HEK293 (cell line): ENCODE measurements at regions of chr1 and their contacts with region 1.

Region 1: DNA sequence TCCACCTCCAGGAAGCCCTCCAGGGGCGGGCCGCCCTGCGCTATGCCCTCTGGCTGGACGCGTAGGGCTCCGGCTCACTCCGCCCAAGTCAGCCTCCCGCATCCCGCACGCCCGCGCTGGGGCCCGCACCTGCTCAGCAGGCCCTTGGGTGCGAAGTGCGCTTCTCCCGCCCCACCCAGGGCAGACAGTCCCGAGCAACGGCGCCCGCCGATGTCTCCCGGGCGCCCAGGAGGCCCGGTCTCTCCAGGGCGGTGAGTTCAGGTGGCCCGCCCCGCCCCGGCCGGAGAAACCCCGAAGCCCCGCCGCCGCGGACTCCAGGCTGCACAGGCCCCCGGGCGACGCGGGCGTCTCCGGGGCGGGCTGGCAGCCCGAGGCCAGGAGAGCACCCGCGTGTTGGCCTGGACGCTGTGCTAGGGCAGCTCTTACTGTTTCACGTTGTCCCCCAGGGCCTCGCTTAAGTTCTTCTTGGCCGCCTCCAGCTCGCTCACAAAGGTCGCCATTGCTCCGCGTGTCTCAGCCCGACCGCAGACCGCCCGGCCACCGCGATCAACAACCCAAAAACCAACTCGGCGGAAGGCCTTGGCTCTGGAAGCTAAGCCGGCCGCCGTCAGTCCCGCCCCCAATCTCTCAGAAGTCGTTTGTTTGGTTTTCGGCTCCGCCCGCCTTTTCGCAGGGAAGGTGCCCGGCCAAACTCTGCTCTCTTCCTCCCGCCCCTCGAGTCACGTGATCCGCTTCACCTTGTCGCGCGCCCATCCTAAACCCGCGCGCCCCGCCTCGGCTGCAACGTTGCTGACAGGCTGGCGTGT is at the start of gene TADA1:
- H3K4me3 ChIP-seq: peak within 1 kb of the TSS; percentile 81
- H3K27ac ChIP-seq: peak within 1 kb of the TSS; percentile 79
- H3K4me1 ChIP-seq: no peaks in the 10 kb centered on the region
- CTCF ChIP-seq: peak; percentile 66; the same call in 1 of the 2 replicates

Region 2: GRCh38 chr1:166838766-166839599 is 37.0 kb before region 1 on chr1 and contains the start of gene POGK:
- CTCF ChIA-PET with region 1: no interaction called
- POLR2A ChIA-PET with region 1: interaction called, 21 read pairs
- H3K4me3 ChIP-seq: peak within 1 kb of the TSS; percentile 62
- H3K27ac ChIP-seq: peak within 1 kb of the TSS; percentile 69
- H3K4me1 ChIP-seq: no peaks in the 10 kb centered on the region
- CTCF ChIP-seq: no peak

Region 3: DNA sequence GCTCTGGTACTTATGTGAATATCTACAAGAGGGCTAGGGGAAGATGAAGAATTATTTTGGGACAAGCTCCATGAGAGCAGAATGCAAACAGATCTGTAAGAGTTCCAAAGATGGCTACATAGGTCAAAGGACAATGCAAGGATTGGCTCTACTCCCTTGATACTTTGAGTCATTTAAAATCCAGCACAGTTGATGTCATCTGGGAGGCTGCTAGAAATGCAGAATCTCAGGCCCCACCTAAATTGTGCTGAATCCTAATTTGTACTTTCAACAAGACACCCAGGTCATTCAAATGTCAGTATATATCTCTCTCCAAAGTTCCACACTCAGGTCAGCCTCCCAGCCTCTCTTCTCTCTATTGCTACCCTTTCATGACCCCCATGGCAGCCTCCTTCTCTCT is 23.8 kb after region 1 on chr1:
- CTCF ChIA-PET with region 1: no interaction called
- POLR2A ChIA-PET with region 1: no interaction called
- H3K4me3 ChIP-seq: no peak overlapping the region
- H3K27ac ChIP-seq: no peak overlapping the region
- H3K4me1 ChIP-seq: no peaks in the 10 kb centered on the region
- CTCF ChIP-seq: no peak

Region 4: GRCh38 chr1:166933633-166934032 is 57.7 kb after region 1 on chr1:
- CTCF ChIA-PET with region 1: no interaction called
- POLR2A ChIA-PET with region 1: no interaction called
- H3K4me3 ChIP-seq: no peak overlapping the region
- H3K27ac ChIP-seq: no peak overlapping the region
- H3K4me1 ChIP-seq: no peaks in the 10 kb centered on the region
- CTCF ChIP-seq: no peak